ENCODE measurements at regions of chr11 and their contacts with region 1.

Region 1: DNA sequence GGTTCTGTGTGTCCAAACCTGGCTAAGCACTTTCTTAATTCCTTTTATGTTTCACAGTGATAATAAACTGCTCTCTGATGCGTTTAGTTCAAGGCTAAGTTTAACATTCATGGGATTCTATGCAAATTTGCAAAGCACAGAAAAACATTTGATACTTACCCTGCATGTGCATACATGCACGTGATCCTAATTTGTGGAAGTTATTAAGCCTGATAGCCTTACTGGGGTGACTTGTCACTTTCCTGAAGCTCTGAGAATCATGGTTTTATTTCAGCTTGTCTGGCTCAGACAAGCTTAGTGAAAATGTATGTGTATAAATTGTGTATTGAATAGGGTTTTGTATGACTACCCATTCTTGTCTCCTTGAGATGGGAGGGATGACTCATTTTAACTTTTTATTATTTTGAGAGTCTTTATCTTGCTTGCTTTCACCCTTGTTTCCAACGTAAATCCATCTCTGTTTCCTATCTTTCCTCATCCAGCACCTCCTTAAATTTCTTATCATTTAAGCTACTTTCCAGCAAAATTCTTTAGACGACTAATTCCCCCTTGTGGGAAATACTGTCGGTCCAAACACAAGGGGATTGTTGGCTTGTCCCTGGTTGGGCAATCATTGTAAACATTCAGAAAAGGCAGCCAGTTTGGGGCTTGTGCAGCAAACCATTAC is 167.1 kb downstream of the C11orf91 start:
- DNase-seq: no peak
- H3K4me3 ChIP-seq: no peak overlapping the region
- H3K27ac ChIP-seq: no peak overlapping the region
- H3K27me3 ChIP-seq: no peaks in the 10 kb centered on the region
- CTCF ChIP-seq: no peak

Region 2: GRCh38 chr11:33520112-33520511 is 13.4 kb before region 1 on chr11:
- CTCF ChIA-PET with region 1: no interaction called
- POLR2A ChIA-PET with region 1: interaction called, 10 read pairs
- DNase-seq: no peak
- H3K4me3 ChIP-seq: no peak overlapping the region
- H3K27ac ChIP-seq: no peak overlapping the region
- H3K27me3 ChIP-seq: no peaks in the 10 kb centered on the region
- CTCF ChIP-seq: no peak

Region 3: GRCh38 chr11:33606762-33607161 is 73.2 kb after region 1 on chr11:
- CTCF ChIA-PET with region 1: no interaction called
- POLR2A ChIA-PET with region 1: no interaction called
- DNase-seq: no peak
- H3K4me3 ChIP-seq: no peak overlapping the region
- H3K27ac ChIP-seq: no peak overlapping the region
- H3K27me3 ChIP-seq: no peaks in the 10 kb centered on the region
- CTCF ChIP-seq: no peak